Adrenal gland (tissue), 19 donors: ENCODE measurements at regions of chr9 and their contacts with region 1.

Region 1: GRCh38 chr9:35116898-35117551 is 1.4 kb upstream of the ATOSB start:
- DNase-seq: peak; percentile 91 to 97 (median 96)
- H3K4me3 ChIP-seq: peak overlapping the region in 1 of 4 donors; percentile 52
- H3K27ac ChIP-seq: peak overlapping the region in 4 of 5 donors; percentile 75 to 83 (median 76)
- H3K4me1 ChIP-seq: peaks cover 26 to 43% of the 10 kb centered on the region in 2 donors
- H3K27me3 ChIP-seq: no peaks in the 10 kb centered on the region
- CTCF ChIP-seq: peak; percentile 91 to 97 (median 96)
- POLR2A ChIP-seq: no peak

Region 2: GRCh38 chr9:34989003-34989945 is 127.8 kb before region 1 on chr9 and contains the start of gene DNAJB5:
- intact Hi-C with region 1: no loop called
- DNase-seq: peak; percentile 99 to 100 (median 100)
- H3K4me3 ChIP-seq: peak within 1 kb of the TSS in 3 of 4 donors; percentile 63 to 88 (median 71)
- H3K27ac ChIP-seq: peak within 1 kb of the TSS in 4 of 5 donors; percentile 86 to 95 (median 91)
- H3K4me1 ChIP-seq: peaks cover 29 to 40% of the 10 kb centered on the region in 2 donors
- H3K27me3 ChIP-seq: no peaks in the 10 kb centered on the region
- CTCF ChIP-seq: peak in 1 of 6 experiments; percentile 4
- POLR2A ChIP-seq: peak; percentile 93 to 95
- total RNA-seq, gene DNAJB5: 6.2 to 22.4 (median 13.3) TPM

Region 3: GRCh38 chr9:35158501-35159280 is 41.7 kb after region 1 on chr9:
- intact Hi-C with region 1: loop called in 1 of 2 experiments (anchors 5 kb)
- DNase-seq: no peak
- H3K4me3 ChIP-seq: no peak overlapping the region
- H3K27ac ChIP-seq: no peak overlapping the region
- H3K4me1 ChIP-seq: peaks cover 4 to 13% of the 10 kb centered on the region in 2 donors
- H3K27me3 ChIP-seq: no peaks in the 10 kb centered on the region
- CTCF ChIP-seq: no peak
- POLR2A ChIP-seq: no peak

Region 4: GRCh38 chr9:35258676-35259474 is 141.8 kb after region 1 on chr9:
- intact Hi-C with region 1: loop called (anchors 2 to 5 kb)
- DNase-seq: peak; percentile 68 to 95 (median 85)
- H3K4me3 ChIP-seq: no peak overlapping the region
- H3K27ac ChIP-seq: no peak overlapping the region
- H3K4me1 ChIP-seq: peaks cover 0 to 7% of the 10 kb centered on the region in 2 donors
- H3K27me3 ChIP-seq: no peaks in the 10 kb centered on the region
- CTCF ChIP-seq: peak; percentile 61 to 85 (median 74)
- POLR2A ChIP-seq: no peak

Region 5: DNA sequence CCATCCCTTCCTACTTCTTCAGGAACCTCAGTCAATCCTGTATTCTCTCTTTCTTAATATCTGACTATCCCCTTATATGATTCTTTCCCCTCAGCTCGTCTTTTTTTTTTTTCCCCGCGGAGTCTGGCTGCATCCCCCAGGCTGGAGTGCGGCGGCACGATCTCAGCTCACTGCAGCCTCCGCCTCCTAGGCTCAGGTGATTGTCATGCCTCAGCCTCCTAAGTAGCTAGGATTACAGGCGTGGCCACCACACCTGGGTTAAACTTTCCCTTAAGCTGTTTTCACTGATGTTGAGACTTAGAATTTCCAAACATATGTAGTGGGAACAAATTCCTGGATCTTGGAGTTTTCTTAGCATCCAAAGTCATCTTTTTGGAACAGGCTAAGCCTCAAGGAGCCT is 359.6 kb after region 1 on chr9:
- intact Hi-C with region 1: loop called (anchors 2 to 5 kb)
- DNase-seq: no peak
- H3K4me3 ChIP-seq: no peak overlapping the region
- H3K27ac ChIP-seq: no peak overlapping the region
- H3K4me1 ChIP-seq: no peaks in the 10 kb centered on the region
- H3K27me3 ChIP-seq: no peaks in the 10 kb centered on the region
- CTCF ChIP-seq: no peak
- POLR2A ChIP-seq: no peak